PC-9 (cell line): ENCODE measurements at regions of chr21 and their contacts with region 1.

Region 1: GRCh38 chr21:32520875-32521735 is 64.2 kb downstream of the TCP10L start:
- DNase-seq: peak; percentile 70 to 76
- H3K4me3 ChIP-seq: no peak overlapping the region
- H3K27ac ChIP-seq: no peak overlapping the region
- H3K4me1 ChIP-seq: no peaks in the 10 kb centered on the region
- H3K27me3 ChIP-seq: no peaks in the 10 kb centered on the region
- CTCF ChIP-seq: no peak

Region 2: GRCh38 chr21:32412162-32413014 is 108.7 kb before region 1 on chr21 and contains the start of gene EVA1C:
- CTCF ChIA-PET with region 1: interaction called, 7 read pairs
- POLR2A ChIA-PET with region 1: no interaction called
- intact Hi-C with region 1: loop called (anchors 5 kb)
- DNase-seq: peak in 1 of 2 experiments; percentile 45
- H3K4me3 ChIP-seq: peak within 1 kb of the TSS; percentile 51
- H3K27ac ChIP-seq: no peak within 1 kb of the TSS
- H3K4me1 ChIP-seq: no peaks in the 10 kb centered on the region; the same call in 1 of the 2 replicates
- H3K27me3 ChIP-seq: peaks cover 32% of the 10 kb centered on the region; the same call in 1 of the 2 replicates
- CTCF ChIP-seq: no peak
- total RNA-seq, gene EVA1C: 3.0 and 3.1 TPM in 2 replicates